CD4-positive, alpha-beta T cell (primary cell): ENCODE measurements at regions of chr18 and their contacts with region 1.

Region 1: DNA sequence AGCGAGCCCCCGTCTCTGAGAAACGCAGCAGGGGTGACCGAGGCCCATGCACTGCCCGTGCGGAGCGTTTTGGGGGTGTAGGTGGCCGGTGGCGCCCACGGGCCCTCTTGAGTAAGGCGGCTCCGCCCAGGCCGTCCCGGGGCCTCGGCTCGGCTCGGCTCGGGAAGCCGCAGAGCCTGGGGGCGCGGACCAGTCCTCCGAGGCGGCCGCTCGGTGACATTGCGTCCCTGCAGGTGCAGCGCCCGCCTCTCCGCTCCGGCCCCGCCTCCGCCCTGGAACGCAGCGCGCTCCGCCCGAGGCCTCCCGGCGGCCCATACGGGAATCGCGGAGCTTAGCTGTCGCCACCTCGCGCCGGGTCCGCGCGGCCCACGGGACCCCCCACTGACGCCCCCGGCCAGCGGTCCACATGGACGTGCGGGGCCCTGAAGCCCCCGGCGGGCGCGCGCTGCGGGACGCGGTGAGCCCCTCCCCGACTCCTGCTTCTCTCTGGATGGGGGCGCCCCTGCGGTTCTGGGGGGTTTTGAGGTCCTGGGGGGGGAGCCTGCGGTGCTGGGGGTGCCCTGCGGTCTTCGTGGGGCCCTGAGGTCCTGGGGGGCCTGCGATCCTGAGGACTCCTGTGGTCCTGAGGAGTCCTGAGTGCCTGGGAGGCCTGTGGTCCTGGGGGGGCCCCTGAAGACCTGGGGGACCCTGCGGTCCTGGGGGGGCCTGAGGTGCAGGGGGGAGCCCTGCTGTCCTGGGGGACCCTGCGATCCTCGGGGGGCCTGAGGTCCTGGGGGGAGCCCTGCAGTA is at the start of gene HSBP1L1:
- DNase-seq: peak; percentile 36 to 85 (median 64)
- ATAC-seq: peak; percentile 83
- H3K4me3 ChIP-seq: peak within 1 kb of the TSS; percentile 67
- H3K4me3 Mint-ChIP-seq: peak within 1 kb of the TSS; percentile 97
- H3K27ac ChIP-seq: peak within 1 kb of the TSS; percentile 38 to 72
- H3K27ac Mint-ChIP-seq: peak within 1 kb of the TSS; percentile 97
- H3K4me1 ChIP-seq: peaks cover 51% of the 10 kb centered on the region
- H3K4me1 Mint-ChIP-seq: peaks cover 42% of the 10 kb centered on the region
- H3K27me3 ChIP-seq: no peaks in the 10 kb centered on the region
- H3K27me3 Mint-ChIP-seq: peaks cover 4% of the 10 kb centered on the region
- CTCF ChIP-seq: peak; percentile 28
- total RNA-seq, gene HSBP1L1: 42.6 to 42.7 TPM

Region 2: DNA sequence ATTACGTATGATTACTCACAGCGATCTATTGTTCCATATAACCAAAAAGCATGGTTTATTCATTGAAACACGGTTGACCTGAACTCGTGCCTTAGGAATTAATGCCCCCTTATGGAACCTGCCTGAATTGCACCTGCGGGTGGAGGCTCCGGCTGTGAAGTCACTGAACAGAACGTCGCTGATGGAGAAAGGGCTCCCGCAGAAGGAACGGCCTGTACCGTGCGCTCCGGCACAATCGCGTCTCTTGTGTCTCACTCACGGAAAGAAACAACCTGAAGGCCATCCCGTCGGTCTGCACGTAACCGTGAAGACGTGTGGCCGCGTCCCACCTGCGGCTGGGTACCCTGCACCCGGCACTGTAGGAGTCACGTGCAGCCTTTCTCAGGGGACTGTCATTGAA is 435.7 kb before region 1 on chr18:
- CTCF ChIA-PET with region 1: no interaction called
- POLR2A ChIA-PET with region 1: no interaction called
- intact Hi-C with region 1: loop called in 1 of 2 experiments (anchors 10 kb)
- DNase-seq: peak; percentile 62 to 86 (median 72)
- ATAC-seq: peak; percentile 49
- H3K4me3 ChIP-seq: no peak overlapping the region
- H3K4me3 Mint-ChIP-seq: peak overlapping the region; percentile 3
- H3K27ac ChIP-seq: no peak overlapping the region
- H3K27ac Mint-ChIP-seq: peak overlapping the region; percentile 57
- H3K4me1 ChIP-seq: peaks cover 26% of the 10 kb centered on the region
- H3K4me1 Mint-ChIP-seq: peaks cover 39% of the 10 kb centered on the region
- H3K27me3 ChIP-seq: peaks cover 0 to 5% of the 10 kb centered on the region in 2 experiments
- H3K27me3 Mint-ChIP-seq: no peaks in the 10 kb centered on the region
- CTCF ChIP-seq: peak; percentile 95

Region 3: GRCh38 chr18:79790996-79791972 is 173.2 kb before region 1 on chr18:
- CTCF ChIA-PET with region 1: no interaction called
- POLR2A ChIA-PET with region 1: no interaction called
- intact Hi-C with region 1: loop called in 1 of 2 experiments (anchors 10 kb)
- DNase-seq: peak in 4 of 14 experiments; percentile 7 to 49 (median 24)
- ATAC-seq: no peak
- H3K4me3 ChIP-seq: no peak overlapping the region
- H3K4me3 Mint-ChIP-seq: no peak overlapping the region
- H3K27ac ChIP-seq: no peak overlapping the region
- H3K27ac Mint-ChIP-seq: no peak overlapping the region
- H3K4me1 ChIP-seq: no peaks in the 10 kb centered on the region
- H3K4me1 Mint-ChIP-seq: peaks cover 10% of the 10 kb centered on the region
- H3K27me3 ChIP-seq: peaks cover 36 to 63% of the 10 kb centered on the region in 2 experiments
- H3K27me3 Mint-ChIP-seq: peaks cover 70% of the 10 kb centered on the region
- CTCF ChIP-seq: no peak

Region 4: DNA sequence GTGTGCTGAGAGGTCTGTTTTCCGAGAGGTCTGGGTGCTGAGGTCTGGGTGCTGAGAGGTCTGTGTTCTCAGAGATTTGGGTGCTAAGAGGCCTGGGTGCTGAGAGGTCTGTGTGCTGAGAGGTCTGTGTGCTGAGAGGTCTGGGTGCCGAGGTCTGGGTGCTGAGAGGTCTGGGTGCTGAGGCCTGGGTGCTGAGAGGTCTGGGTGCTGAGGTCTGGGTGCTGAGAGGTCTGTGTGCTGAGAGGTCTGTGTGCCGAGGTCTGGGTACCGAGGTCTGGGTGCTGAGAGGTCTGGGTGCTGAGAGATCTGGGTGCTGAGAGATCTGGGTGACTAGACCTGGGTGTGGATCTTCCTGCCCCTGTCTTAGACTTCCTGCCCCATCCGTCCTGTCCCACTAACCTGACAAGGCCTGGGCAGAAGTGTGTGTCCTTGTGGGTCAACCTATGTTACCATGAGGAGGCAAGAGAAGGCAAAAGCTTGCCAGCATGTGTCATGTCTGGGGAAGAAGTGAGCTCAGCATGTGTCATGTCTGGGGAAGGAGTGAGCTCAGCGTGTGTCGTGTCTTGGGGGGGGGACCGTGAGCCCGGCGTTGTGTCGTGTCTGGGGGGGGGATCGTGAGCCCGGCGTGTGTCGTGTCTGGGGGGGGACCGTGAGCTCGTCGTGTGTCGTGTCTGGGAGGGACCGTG is 97.5 kb before region 1 on chr18:
- CTCF ChIA-PET with region 1: no interaction called
- POLR2A ChIA-PET with region 1: no interaction called
- intact Hi-C with region 1: no loop called
- DNase-seq: peak in 2 of 14 experiments; percentile 8 to 11
- ATAC-seq: no peak
- H3K4me3 ChIP-seq: no peak overlapping the region
- H3K4me3 Mint-ChIP-seq: no peak overlapping the region
- H3K27ac ChIP-seq: no peak overlapping the region
- H3K27ac Mint-ChIP-seq: no peak overlapping the region
- H3K4me1 ChIP-seq: no peaks in the 10 kb centered on the region
- H3K4me1 Mint-ChIP-seq: no peaks in the 10 kb centered on the region
- H3K27me3 ChIP-seq: no peaks in the 10 kb centered on the region
- H3K27me3 Mint-ChIP-seq: no peaks in the 10 kb centered on the region
- CTCF ChIP-seq: no peak

Region 5: GRCh38 chr18:79912409-79912991 is 52.0 kb before region 1 on chr18:
- CTCF ChIA-PET with region 1: no interaction called
- POLR2A ChIA-PET with region 1: interaction called, 6 read pairs
- intact Hi-C with region 1: loop called in 1 of 2 experiments (anchors 10 kb)
- DNase-seq: peak in 11 of 14 experiments; percentile 16 to 64 (median 30)
- ATAC-seq: peak; percentile 82
- H3K4me3 ChIP-seq: no peak overlapping the region
- H3K4me3 Mint-ChIP-seq: peak overlapping the region; percentile 6
- H3K27ac ChIP-seq: no peak overlapping the region
- H3K27ac Mint-ChIP-seq: peak overlapping the region; percentile 95
- H3K4me1 ChIP-seq: peaks cover 23% of the 10 kb centered on the region
- H3K4me1 Mint-ChIP-seq: peaks cover 25% of the 10 kb centered on the region
- H3K27me3 ChIP-seq: no peaks in the 10 kb centered on the region
- H3K27me3 Mint-ChIP-seq: peaks cover 4% of the 10 kb centered on the region
- CTCF ChIP-seq: no peak

Region 6: DNA sequence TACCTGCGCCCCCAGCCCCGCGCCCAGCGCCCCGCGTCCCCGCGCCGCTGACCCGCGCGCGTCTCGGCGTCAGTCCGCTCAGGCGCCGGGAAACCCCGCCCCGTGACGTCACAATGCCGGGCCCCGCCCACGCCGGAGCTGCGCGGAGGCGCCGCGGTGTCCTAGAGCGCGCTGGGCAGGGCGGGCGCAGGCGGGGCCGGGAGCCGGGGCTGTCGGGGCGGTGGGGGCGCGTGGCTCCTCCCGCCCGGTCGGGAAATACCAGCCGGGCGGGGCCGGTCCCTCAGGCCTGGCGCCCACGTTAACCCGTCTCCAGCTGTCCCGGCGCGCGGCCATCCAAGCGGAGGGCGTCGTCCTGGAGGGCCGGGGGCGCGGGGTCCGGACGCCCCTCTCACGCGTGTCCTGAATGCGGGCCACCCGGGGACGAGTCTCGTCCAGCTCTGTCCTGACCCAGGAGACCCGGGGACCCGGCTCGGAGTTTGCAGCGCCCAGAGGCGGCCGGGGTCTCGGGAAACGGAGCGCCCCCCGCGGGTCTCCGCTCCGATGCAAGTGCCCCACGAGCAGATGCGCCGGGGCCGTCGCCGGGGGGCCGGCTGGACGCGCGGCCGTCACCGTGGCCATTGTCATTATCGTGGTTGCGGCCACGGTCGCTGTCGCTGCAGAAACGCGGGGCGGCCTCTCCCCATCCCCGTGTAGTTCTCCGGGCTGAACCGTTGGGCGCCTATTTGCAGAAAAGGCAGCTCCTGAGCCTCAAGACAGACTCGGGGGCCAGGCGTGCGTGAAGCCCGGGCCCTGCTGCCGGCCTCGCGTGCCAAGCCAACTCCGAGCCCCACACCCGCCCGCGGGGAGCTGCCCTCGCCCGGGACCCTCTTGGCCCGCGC is 12.7 kb before region 1 on chr18 and contains the start of gene SLC66A2:
- CTCF ChIA-PET with region 1: interaction called, 3 read pairs
- POLR2A ChIA-PET with region 1: interaction called, 27 read pairs
- intact Hi-C with region 1: loop called in 1 of 2 experiments (anchors 2 kb)
- DNase-seq: peak; percentile 86 to 99 (median 96)
- ATAC-seq: peak; percentile 91
- H3K4me3 ChIP-seq: peak within 1 kb of the TSS; percentile 62
- H3K4me3 Mint-ChIP-seq: peak within 1 kb of the TSS; percentile 87
- H3K27ac ChIP-seq: peak within 1 kb of the TSS in 1 of 2 donors; percentile 35
- H3K27ac Mint-ChIP-seq: peak within 1 kb of the TSS; percentile 80
- H3K4me1 ChIP-seq: peaks cover 36% of the 10 kb centered on the region
- H3K4me1 Mint-ChIP-seq: peaks cover 29% of the 10 kb centered on the region
- H3K27me3 ChIP-seq: no peaks in the 10 kb centered on the region
- H3K27me3 Mint-ChIP-seq: no peaks in the 10 kb centered on the region
- CTCF ChIP-seq: no peak
- total RNA-seq, gene SLC66A2: 44.5 to 44.8 TPM

Region 7: DNA sequence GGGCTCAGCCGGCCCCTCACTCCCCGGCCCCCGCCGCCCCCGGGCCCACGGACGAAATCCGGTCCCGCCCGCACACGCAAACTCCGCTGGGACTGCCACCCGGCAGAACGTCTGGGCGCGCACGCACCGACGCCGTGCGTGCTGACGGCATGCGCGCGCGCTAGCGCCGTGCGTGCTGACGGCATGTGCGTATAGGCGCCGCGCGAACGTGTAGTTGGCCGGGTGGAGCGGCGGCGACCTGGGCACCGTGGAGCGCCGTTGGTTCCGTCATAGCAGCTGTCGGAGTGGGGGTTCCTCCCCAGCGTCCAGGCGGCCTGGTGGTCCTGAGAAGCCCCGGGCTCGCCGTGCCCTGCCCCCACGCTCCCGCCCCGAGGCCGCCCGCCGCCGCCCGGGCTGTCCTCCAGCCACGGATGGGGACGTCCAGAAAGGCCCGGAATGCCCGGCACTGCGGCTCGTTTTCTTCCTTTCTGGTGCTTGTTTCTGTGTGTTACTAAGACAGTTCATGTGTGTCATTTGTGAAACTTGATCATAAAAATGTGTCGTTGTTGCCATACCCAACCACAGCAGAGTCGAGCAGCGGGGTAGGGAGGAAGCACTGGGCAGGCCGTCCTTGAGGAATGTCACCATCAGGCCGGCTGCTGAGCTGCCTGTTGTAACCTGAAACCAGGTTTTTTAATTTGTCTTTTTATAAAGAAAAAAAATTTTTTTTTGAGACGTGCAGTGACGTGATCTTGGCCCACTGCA is 24.1 kb after region 1 on chr18 and contains the start of gene TXNL4A:
- CTCF ChIA-PET with region 1: interaction called, 6 read pairs
- POLR2A ChIA-PET with region 1: interaction called, 17 read pairs
- intact Hi-C with region 1: loop called in 1 of 2 experiments (anchors 1 kb)
- DNase-seq: peak; percentile 72 to 94 (median 82)
- ATAC-seq: peak; percentile 93
- H3K4me3 ChIP-seq: peak within 1 kb of the TSS; percentile 82
- H3K4me3 Mint-ChIP-seq: peak within 1 kb of the TSS; percentile 93
- H3K27ac ChIP-seq: peak within 1 kb of the TSS; percentile 84 to 89
- H3K27ac Mint-ChIP-seq: peak within 1 kb of the TSS; percentile 89
- H3K4me1 ChIP-seq: peaks cover 31% of the 10 kb centered on the region
- H3K4me1 Mint-ChIP-seq: peaks cover 39% of the 10 kb centered on the region
- H3K27me3 ChIP-seq: no peaks in the 10 kb centered on the region
- H3K27me3 Mint-ChIP-seq: no peaks in the 10 kb centered on the region
- CTCF ChIP-seq: no peak
- total RNA-seq, gene TXNL4A: 55.0 to 55.7 TPM